Common myeloid progenitor, CD34-positive (primary cell): ENCODE measurements at regions of chr5 and their contacts with region 1.

Region 1: GRCh38 chr5:172697123-172698121 is 56.4 kb downstream of the NEURL1B start:
- DNase-seq: peak; percentile 85 to 91 (median 88)
- H3K4me3 ChIP-seq: peak overlapping the region; percentile 35 to 89 (median 76)
- H3K27ac ChIP-seq: peak overlapping the region; percentile 30 to 79
- H3K4me1 ChIP-seq: peaks cover 8 to 46% (median 29%) of the 10 kb centered on the region in 4 experiments
- H3K27me3 ChIP-seq: no peaks in the 10 kb centered on the region

Region 2: DNA sequence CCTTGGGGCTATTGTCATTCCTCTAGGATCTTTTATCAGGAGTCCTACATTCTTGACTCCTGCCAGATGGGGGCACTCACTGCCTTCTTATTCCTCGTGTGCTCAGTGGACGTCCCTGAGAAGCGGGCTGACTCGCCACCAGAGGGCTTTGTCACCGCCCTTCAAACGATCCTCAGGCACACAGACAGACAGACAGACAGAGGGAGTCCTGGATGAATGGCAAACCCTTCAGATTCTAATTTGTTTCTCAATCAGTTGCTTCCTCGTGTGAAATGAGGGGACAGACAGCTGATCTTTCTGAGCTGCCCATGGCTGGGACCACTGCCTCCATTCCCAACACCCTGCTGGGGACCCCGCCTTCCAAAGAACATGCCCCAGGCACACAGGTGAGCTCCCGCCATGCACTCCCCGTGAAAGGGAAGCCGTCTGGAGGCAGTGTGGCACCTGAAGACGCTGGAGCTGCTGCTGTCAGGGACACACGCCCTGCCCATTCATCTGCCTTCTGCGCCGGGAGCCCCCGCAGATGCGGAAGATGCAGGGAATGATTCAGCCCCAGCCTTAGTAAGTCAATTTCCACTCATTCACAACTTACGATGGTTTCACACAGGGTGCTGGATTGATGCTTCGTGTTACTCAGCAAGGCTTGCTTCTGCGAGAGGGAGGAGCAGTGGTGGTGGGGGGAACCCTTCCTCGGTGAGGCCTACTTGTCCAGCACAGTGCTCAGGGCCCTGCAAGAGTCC is 218.2 kb before region 1 on chr5:
- CTCF ChIA-PET with region 1: interaction called, 207 read pairs
- POLR2A ChIA-PET with region 1: no interaction called
- DNase-seq: peak; percentile 90 to 94 (median 92)
- H3K4me3 ChIP-seq: no peak overlapping the region
- H3K27ac ChIP-seq: no peak overlapping the region
- H3K4me1 ChIP-seq: no peaks in the 10 kb centered on the region
- H3K27me3 ChIP-seq: peaks cover 0 to 2% (median 0%) of the 10 kb centered on the region in 5 experiments

Region 3: GRCh38 chr5:172640822-172641358 is 56.5 kb before region 1 on chr5 and contains the start of gene NEURL1B:
- CTCF ChIA-PET with region 1: interaction called, 27 read pairs
- POLR2A ChIA-PET with region 1: no interaction called
- DNase-seq: peak; percentile 63 to 82 (median 79)
- H3K4me3 ChIP-seq: peak within 1 kb of the TSS; percentile 64 to 88 (median 68)
- H3K27ac ChIP-seq: peak within 1 kb of the TSS in 1 of 2 experiments; percentile 16
- H3K4me1 ChIP-seq: peaks cover 0 to 70% (median 42%) of the 10 kb centered on the region in 4 experiments
- H3K27me3 ChIP-seq: peaks cover 0 to 6% (median 0%) of the 10 kb centered on the region in 5 experiments

Region 4: DNA sequence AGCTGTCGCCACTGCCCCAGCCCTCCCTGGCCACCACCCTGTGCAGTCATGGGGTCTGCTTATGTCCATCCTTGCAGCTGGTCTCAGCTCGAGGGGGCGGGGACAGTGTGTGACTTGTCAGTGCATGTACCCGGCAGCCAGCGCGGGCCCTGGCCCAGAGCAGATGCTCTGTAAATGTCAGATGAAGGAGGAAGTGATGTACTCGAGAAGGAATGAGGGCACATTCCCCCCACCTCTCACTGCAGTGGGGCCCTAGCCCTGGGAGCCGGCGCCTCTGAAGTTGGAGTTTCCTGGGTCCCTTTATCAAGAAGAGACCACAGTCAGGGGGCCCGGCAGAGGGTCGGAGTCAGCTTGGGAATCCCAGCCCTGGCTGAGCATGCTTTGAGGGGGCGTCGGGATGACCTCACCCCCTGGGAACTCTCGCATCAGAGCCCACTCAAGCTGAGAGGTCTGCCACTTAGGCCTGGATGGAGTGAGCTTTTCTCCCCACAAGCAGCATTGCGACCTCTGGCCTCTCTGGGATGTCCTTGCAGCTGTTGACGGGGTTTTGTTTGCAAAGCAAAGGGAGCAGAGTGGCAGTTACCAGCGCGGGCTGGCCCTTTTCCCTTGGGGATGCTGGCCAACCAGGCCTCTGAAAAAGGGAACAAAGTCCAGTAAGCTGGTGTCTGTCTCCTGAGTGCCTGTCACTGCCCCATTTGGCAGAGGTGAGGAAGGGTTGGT is 37.4 kb before region 1 on chr5:
- CTCF ChIA-PET with region 1: interaction called, 22 read pairs
- POLR2A ChIA-PET with region 1: interaction called, 3 read pairs
- DNase-seq: peak; percentile 40 to 82 (median 72)
- H3K4me3 ChIP-seq: no peak overlapping the region
- H3K27ac ChIP-seq: peak overlapping the region; percentile 33 to 73
- H3K4me1 ChIP-seq: peaks cover 1 to 64% (median 34%) of the 10 kb centered on the region in 4 experiments
- H3K27me3 ChIP-seq: no peaks in the 10 kb centered on the region

Region 5: DNA sequence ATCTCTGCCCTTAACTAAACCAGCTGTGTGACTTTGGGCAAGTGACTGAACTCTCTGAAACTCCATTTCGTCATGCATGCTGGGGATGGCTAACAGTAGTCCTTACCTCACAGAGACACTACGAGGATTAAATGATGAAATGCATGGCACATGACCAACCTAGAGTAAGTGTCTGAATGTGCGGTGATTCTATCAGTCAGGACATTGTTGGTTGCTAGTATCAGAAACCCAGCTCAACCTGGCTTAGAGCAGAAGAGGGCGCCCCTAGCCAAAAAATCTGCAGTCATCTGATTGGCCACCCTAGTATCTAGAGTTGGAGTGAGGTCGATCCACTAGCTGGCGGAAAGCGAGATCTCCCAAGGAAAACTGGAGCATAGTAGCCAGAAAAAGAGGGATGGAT is 31.2 kb before region 1 on chr5:
- CTCF ChIA-PET with region 1: interaction called, 22 read pairs
- POLR2A ChIA-PET with region 1: interaction called, 3 read pairs
- DNase-seq: no peak
- H3K4me3 ChIP-seq: no peak overlapping the region
- H3K27ac ChIP-seq: no peak overlapping the region
- H3K4me1 ChIP-seq: peaks cover 0 to 23% (median 6%) of the 10 kb centered on the region in 4 experiments
- H3K27me3 ChIP-seq: peaks cover 0 to 3% (median 0%) of the 10 kb centered on the region in 5 experiments

Region 6: DNA sequence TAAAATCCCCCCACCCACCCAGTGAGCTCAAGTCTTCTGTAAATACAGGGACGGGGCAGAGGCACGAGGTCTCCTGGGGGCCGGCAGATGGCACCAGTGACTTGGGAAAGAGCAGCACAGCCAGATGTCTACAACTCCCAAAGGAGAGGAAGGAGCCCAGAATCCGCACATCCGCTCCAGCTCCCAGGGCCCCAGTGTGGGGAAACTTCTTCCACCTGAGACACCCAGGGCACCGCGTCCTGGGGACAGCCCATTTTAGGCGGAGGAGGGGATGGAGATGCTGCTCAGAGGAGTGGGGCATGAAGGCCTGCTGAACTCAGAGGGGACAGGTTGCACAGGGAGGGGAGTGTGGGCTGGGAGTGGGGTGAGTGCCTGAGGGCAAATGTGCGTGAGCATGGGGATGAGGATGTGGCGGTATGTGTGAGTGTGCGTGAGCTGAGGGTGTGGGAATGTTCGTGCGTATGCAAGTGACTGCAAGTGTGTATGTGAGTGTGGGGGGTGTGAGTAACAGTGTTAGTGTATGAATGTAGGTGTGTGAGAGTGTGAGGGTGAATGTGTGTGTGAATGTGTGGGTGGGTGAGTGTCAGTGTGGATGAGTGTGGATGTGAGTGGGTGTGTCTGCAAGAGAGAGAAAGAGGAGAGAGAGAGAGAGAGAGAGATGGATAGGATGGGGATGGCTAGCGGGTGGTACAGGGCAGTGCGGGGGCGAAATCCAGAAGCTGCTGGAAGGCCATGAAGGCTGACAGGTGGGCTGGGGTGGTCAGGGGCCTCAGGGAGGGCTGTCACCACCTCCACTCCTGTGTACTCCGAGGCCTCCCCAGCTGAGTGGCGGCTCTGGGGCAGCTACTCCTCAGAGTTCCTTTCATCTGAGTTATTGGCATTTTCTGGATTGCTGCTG is 10.1 kb after region 1 on chr5:
- CTCF ChIA-PET with region 1: interaction called, 17 read pairs
- POLR2A ChIA-PET with region 1: no interaction called
- DNase-seq: peak in 2 of 3 donors; percentile 45 to 47
- H3K4me3 ChIP-seq: no peak overlapping the region
- H3K27ac ChIP-seq: no peak overlapping the region
- H3K4me1 ChIP-seq: peaks cover 0 to 5% (median 2%) of the 10 kb centered on the region in 4 experiments
- H3K27me3 ChIP-seq: no peaks in the 10 kb centered on the region

Region 7: GRCh38 chr5:172714491-172715421 is 17.3 kb after region 1 on chr5:
- CTCF ChIA-PET with region 1: interaction called, 17 read pairs
- POLR2A ChIA-PET with region 1: no interaction called
- DNase-seq: peak; percentile 64 to 75 (median 66)
- H3K4me3 ChIP-seq: no peak overlapping the region
- H3K27ac ChIP-seq: no peak overlapping the region
- H3K4me1 ChIP-seq: peaks cover 0 to 15% (median 5%) of the 10 kb centered on the region in 4 experiments
- H3K27me3 ChIP-seq: no peaks in the 10 kb centered on the region